ENCODE measurements at regions of chr11 and their contacts with region 1.

Region 1: DNA sequence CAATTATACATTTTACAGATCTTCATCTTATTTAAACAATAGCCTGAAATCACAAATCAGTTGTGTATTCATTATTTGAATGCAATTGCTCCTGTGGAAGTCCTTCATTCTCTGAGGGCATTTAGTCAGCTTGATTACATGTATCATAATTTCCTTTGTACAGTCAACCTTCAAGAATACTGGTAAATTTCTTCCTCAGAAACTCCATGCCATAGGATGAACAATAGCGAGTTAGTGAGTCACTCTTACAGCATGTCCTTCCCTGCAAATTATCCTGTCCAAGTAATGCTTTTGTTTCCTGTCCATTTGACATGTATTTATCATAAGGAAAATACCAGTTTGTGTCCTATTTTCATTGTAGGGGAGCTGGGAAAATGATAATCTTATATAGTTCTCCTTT is 3.8 kb downstream of the OR10S1 start:
- DNase-seq: peak; percentile 89
- H3K4me3 Mint-ChIP-seq: no peak overlapping the region
- H3K27ac Mint-ChIP-seq: peak overlapping the region; percentile 77
- H3K4me1 Mint-ChIP-seq: peaks cover 45% of the 10 kb centered on the region
- H3K27me3 Mint-ChIP-seq: no peaks in the 10 kb centered on the region
- CTCF ChIP-seq: no peak

Region 2: DNA sequence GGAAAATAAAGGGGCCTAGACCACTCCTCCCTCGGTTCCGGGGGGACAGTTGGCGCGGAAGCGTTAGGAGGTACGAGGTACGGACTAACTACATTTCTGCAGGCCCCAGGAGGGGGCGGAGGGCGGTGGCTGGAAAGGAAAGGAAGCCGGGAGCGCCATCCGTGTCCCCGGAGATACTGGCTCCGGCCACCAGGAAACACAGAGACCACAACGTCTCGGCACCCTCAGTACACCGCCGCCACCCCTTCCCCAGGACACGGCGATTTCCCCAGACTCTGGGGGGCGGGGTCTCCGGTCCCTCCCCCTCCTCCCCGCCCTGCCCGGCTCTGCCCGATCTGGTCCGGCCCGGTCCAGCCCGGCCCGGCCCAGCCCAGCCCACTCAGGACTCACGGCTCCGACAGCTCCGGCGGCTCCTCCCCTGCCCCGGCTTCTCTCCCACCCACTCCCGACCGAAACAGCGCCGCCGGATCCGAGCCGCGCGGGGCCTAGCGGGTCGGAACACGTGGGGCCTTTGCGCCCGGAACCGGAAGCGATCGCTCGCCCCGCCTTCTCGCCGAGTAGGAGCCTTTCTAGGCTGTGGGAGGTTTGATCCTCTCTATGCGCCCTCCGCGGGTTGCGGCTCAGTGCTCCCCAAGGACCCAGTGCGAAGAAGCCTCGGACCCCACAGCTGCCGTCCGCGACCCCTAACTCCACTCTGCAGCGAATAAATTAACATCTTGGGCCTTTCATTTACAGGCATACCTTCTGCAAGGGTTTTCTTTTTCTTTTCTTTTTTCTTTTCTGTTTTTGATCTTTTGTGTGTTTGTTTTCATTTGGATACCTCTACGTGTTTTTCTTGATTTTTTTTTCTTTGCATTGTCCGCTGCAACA is 232.4 kb before region 1 on chr11 and contains the start of gene ZNF202:
- CTCF ChIA-PET with region 1: no interaction called
- POLR2A ChIA-PET with region 1: interaction called, 3 read pairs
- intact Hi-C with region 1: loop called (anchors 5 kb)
- DNase-seq: peak; percentile 91
- H3K4me3 Mint-ChIP-seq: peak within 1 kb of the TSS; percentile 89
- H3K27ac Mint-ChIP-seq: peak within 1 kb of the TSS; percentile 87
- H3K4me1 Mint-ChIP-seq: peaks cover 13% of the 10 kb centered on the region
- H3K27me3 Mint-ChIP-seq: no peaks in the 10 kb centered on the region
- CTCF ChIP-seq: no peak
- total RNA-seq, gene ZNF202: 15.6 and 22.1 TPM in 2 replicates

Region 3: GRCh38 chr11:123856444-123856843 is 117.4 kb before region 1 on chr11:
- CTCF ChIA-PET with region 1: no interaction called
- POLR2A ChIA-PET with region 1: no interaction called
- intact Hi-C with region 1: no loop called
- DNase-seq: peak; percentile 11
- H3K4me3 Mint-ChIP-seq: no peak overlapping the region
- H3K27ac Mint-ChIP-seq: no peak overlapping the region
- H3K4me1 Mint-ChIP-seq: peaks cover 9% of the 10 kb centered on the region
- H3K27me3 Mint-ChIP-seq: no peaks in the 10 kb centered on the region
- CTCF ChIP-seq: no peak

Region 4: DNA sequence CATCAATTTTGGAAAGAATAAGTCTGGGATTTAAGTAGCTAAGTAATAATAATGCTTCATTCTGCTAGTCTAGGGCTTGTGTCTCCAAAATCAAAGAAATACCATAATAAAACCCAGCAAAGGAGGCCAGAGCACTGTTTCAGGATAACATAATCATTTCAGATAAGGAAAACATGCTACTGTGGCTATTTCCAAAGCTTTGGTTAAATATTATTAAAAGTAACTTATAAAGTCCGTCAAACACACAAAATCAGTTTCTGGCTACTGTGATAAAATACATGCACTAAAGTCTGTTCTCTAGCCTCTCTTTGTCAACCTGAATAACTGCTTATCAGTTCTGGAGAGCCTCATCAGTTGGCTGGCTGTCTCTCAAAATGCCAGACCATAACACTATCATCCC is 28.7 kb before region 1 on chr11:
- CTCF ChIA-PET with region 1: no interaction called
- POLR2A ChIA-PET with region 1: no interaction called
- intact Hi-C with region 1: no loop called
- DNase-seq: no peak
- H3K4me3 Mint-ChIP-seq: no peak overlapping the region
- H3K27ac Mint-ChIP-seq: no peak overlapping the region
- H3K4me1 Mint-ChIP-seq: no peaks in the 10 kb centered on the region
- H3K27me3 Mint-ChIP-seq: no peaks in the 10 kb centered on the region
- CTCF ChIP-seq: no peak